ENCODE measurements at regions of chr11 and their contacts with region 1.

Region 1: DNA sequence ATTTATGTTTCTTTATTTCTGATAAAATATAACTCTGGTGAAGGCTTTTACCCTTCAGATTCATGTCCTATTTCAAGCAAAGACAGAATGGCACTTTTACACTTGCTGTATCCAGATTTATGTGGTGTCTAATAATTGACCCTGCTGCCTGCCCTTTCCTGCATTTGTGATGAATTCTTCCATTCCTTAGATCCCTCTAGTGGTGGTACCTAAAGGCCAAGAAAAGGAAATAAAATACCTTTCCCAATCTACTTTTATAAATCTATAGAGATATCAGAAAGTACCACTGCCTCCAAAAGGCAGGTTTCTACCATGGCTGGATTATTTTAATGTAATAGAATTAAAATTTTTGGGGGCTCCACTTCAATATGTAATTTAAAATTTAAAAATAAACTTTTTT is 34.2 kb downstream of the CCDC81 start:
- DNase-seq: peak; percentile 2
- ATAC-seq: no peak
- H3K4me3 ChIP-seq: no peak overlapping the region
- H3K27ac ChIP-seq: no peak overlapping the region
- H3K4me1 ChIP-seq: no peaks in the 10 kb centered on the region
- H3K27me3 ChIP-seq: no peaks in the 10 kb centered on the region
- CTCF ChIP-seq: peak; percentile 53

Region 2: GRCh38 chr11:85941380-85941973 is 467.4 kb before region 1 on chr11:
- CTCF ChIA-PET with region 1: no interaction called
- POLR2A ChIA-PET with region 1: no interaction called
- intact Hi-C with region 1: loop called (anchors 5 kb)
- DNase-seq: peak; percentile 59
- ATAC-seq: peak; percentile 64
- H3K4me3 ChIP-seq: no peak overlapping the region
- H3K27ac ChIP-seq: no peak overlapping the region
- H3K4me1 ChIP-seq: no peaks in the 10 kb centered on the region
- H3K27me3 ChIP-seq: no peaks in the 10 kb centered on the region
- CTCF ChIP-seq: peak; percentile 63

Region 3: GRCh38 chr11:86360775-86361395 is 48.0 kb before region 1 on chr11:
- CTCF ChIA-PET with region 1: interaction called, 3 read pairs
- POLR2A ChIA-PET with region 1: no interaction called
- intact Hi-C with region 1: loop called (anchors 5 kb)
- DNase-seq: peak; percentile 62
- ATAC-seq: peak; percentile 73
- H3K4me3 ChIP-seq: no peak overlapping the region
- H3K27ac ChIP-seq: no peak overlapping the region
- H3K4me1 ChIP-seq: no peaks in the 10 kb centered on the region
- H3K27me3 ChIP-seq: no peaks in the 10 kb centered on the region
- CTCF ChIP-seq: peak; percentile 65